Natural killer cell (primary cell): ENCODE measurements at regions of chr6 and their contacts with region 1.

Region 1: DNA sequence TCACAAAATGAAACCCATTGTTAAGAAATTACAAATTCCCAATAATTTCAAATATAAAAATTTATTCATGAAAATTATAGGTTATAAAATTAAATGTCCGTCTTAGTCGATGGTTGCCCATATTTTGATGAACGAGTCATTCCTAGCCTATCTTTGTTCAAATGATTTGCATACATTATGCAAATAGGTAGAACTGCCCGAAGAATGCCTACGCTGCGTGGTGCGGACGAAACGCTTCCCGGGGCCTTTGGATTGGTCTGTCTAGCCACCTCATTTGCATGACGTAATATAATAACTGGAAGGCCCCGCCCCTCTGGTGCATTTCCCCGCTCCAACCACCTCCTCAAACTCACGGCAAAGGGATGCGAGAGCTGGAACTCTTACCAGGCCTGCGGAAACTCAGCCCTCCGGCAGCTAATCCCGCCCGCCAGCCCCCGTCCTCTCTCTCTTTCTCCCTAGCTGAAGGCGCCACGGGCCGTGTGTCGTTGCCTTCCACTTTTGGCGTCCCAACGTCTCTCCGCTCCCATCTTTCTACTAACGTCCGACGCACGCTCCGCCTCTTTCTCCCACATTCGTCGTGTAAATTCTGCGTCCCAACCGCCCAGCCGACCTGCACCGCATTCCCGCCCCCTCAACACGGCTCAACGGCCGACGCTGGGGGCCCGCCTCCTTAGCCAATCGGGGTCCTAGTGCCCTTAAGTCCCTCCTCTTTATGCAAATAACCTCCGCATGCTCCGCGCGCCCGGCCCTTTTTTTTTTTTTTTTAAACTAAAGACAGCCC is 520 bp upstream of the PRRC2A start:
- DNase-seq: peak; percentile 93 to 99
- ATAC-seq: peak; percentile 80 to 94 (median 84)
- H3K4me3 ChIP-seq: peak overlapping the region; percentile 91
- H3K4me3 Mint-ChIP-seq: peak overlapping the region; percentile 92
- H3K27ac ChIP-seq: peak overlapping the region; percentile 98
- H3K27ac Mint-ChIP-seq: peak overlapping the region; percentile 92 to 95
- H3K4me1 ChIP-seq: peaks cover 29% of the 10 kb centered on the region
- H3K4me1 Mint-ChIP-seq: peaks cover 20 to 25% of the 10 kb centered on the region in 2 donors
- H3K27me3 ChIP-seq: no peaks in the 10 kb centered on the region
- H3K27me3 Mint-ChIP-seq: no peaks in the 10 kb centered on the region
- CTCF ChIP-seq: no peak

Region 2: GRCh38 chr6:31541658-31542521 is 78.1 kb before region 1 on chr6 and contains the start of gene DDX39B:
- intact Hi-C with region 1: loop called (anchors 1 kb)
- DNase-seq: peak; percentile 85 to 99
- ATAC-seq: peak; percentile 69 to 86 (median 77)
- H3K4me3 ChIP-seq: peak within 1 kb of the TSS; percentile 77
- H3K4me3 Mint-ChIP-seq: peak within 1 kb of the TSS; percentile 99
- H3K27ac ChIP-seq: peak within 1 kb of the TSS; percentile 92
- H3K27ac Mint-ChIP-seq: peak within 1 kb of the TSS; percentile 94 to 96
- H3K4me1 ChIP-seq: peaks cover 36% of the 10 kb centered on the region
- H3K4me1 Mint-ChIP-seq: peaks cover 49 to 56% of the 10 kb centered on the region in 2 donors
- H3K27me3 ChIP-seq: no peaks in the 10 kb centered on the region
- H3K27me3 Mint-ChIP-seq: no peaks in the 10 kb centered on the region
- CTCF ChIP-seq: no peak
- total RNA-seq, gene DDX39B: 506 to 571 (median 534) TPM

Region 3: DNA sequence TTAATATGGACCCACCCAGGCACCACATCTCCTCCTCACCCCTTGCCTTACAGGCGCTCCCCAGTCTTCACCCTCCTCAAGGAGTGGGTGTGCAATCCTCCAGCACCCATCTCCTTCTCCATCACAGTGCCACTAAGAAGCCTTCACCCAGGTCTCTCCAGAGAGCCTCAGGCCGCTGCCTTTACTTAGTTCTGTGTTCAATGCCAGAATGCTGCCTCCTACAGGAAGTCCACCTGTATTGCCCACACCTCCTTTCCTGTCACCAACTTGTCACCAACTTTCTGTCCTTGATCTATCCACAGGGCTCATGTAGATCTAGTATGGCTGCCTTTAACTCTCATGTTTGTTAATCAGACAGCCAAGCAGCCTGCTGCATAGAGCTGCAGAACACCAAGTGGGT is 34.5 kb before region 1 on chr6:
- intact Hi-C with region 1: no loop called
- DNase-seq: peak in 1 of 2 donors; percentile 78
- ATAC-seq: peak in 1 of 3 donors; percentile 15
- H3K4me3 ChIP-seq: no peak overlapping the region
- H3K4me3 Mint-ChIP-seq: peak overlapping the region; percentile 69
- H3K27ac ChIP-seq: peak overlapping the region; percentile 77
- H3K27ac Mint-ChIP-seq: peak overlapping the region; percentile 79 to 87
- H3K4me1 ChIP-seq: peaks cover 85% of the 10 kb centered on the region
- H3K4me1 Mint-ChIP-seq: peaks cover 69 to 79% of the 10 kb centered on the region in 2 donors
- H3K27me3 ChIP-seq: no peaks in the 10 kb centered on the region
- H3K27me3 Mint-ChIP-seq: no peaks in the 10 kb centered on the region
- CTCF ChIP-seq: peak; percentile 46